Naive thymus-derived CD4-positive, alpha-beta T cell (primary cell): ENCODE measurements at regions of chr18 and their contacts with region 1.

Region 1: GRCh38 chr18:74081966-74082741 is 65.5 kb downstream of the FBXO15 start:
- DNase-seq: peak; percentile 37 to 80 (median 71)
- ATAC-seq: peak; percentile 94
- H3K4me3 ChIP-seq: peak overlapping the region; percentile 32
- H3K4me3 Mint-ChIP-seq: peak overlapping the region; percentile 71 to 96 (median 84)
- H3K27ac ChIP-seq: peak overlapping the region; percentile 74
- H3K27ac Mint-ChIP-seq: peak overlapping the region; percentile 93 to 98 (median 96)
- H3K4me1 ChIP-seq: peaks cover 0 to 16% of the 10 kb centered on the region in 2 donors
- H3K4me1 Mint-ChIP-seq: peaks cover 7 to 24% (median 21%) of the 10 kb centered on the region in 7 donors
- H3K27me3 ChIP-seq: no peaks in the 10 kb centered on the region
- H3K27me3 Mint-ChIP-seq: no peaks in the 10 kb centered on the region

Region 2: DNA sequence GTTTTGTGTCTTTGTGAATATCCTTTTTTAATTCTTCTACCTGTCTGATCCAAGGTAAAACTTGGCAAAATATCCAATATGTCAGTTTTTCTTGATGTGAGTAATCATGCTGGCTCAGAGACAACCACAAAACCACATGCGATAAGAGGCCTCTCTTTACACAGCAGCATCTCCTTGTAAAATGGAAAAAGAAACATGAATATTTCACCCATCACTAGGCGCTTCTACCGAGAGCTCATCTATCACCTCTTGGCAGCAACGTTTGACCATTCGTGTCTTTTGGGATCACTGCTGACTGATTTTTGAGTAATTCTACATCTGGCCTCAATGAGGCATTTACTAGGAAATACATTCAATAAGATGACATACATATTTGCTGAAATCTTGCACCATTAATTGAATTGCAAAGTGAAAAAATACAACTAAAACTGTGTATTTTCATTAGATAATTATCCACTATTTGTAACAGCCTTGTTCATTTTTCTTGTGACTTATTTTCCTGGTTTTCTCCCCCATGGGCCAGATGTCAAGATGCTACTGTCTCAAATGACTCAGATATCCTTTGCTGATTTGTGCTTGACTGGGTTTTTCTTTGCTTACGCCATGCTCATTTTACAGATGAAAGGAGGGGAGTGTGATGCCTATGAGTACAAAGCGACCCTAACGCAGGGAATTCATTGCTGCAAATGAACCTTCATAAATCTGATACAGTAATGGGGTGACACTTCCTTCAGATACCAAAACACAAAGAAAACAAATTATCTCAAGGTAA is 402.0 kb before region 1 on chr18:
- CTCF ChIA-PET with region 1: no interaction called
- POLR2A ChIA-PET with region 1: no interaction called
- intact Hi-C with region 1: no loop called
- DNase-seq: no peak
- ATAC-seq: no peak
- H3K4me3 ChIP-seq: no peak overlapping the region
- H3K4me3 Mint-ChIP-seq: no peak overlapping the region
- H3K27ac ChIP-seq: no peak overlapping the region
- H3K27ac Mint-ChIP-seq: no peak overlapping the region
- H3K4me1 ChIP-seq: no peaks in the 10 kb centered on the region
- H3K4me1 Mint-ChIP-seq: peaks cover 0 to 8% (median 0%) of the 10 kb centered on the region in 7 donors
- H3K27me3 ChIP-seq: no peaks in the 10 kb centered on the region
- H3K27me3 Mint-ChIP-seq: peaks cover 0 to 8% (median 0%) of the 10 kb centered on the region in 5 donors

Region 3: DNA sequence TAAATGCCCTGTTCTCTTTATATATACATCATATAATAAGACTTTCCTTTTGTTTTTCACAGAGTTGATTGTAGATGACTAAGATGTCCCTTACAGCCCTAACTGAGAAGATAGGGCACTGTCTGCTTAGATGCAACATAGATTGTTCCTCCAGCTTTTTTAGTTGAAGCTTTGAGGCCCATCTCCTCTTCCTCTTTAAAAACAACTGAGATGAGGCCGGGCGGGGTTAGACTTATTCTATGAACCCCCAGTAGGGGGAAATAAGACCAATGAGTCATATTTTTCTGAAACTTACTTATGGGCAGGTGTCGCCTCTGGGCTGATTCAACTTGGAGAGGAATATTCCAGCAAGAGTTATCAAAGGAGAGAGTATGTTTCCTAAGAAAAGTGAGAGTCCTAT is 19.1 kb before region 1 on chr18:
- CTCF ChIA-PET with region 1: interaction called, 30 read pairs
- POLR2A ChIA-PET with region 1: interaction called, 47 read pairs
- intact Hi-C with region 1: loop called (anchors 1 kb)
- DNase-seq: peak in 2 of 9 donors; percentile 17 to 48
- ATAC-seq: no peak
- H3K4me3 ChIP-seq: no peak overlapping the region
- H3K4me3 Mint-ChIP-seq: peak overlapping the region in 2 of 10 donors; percentile 18 to 21
- H3K27ac ChIP-seq: no peak overlapping the region
- H3K27ac Mint-ChIP-seq: peak overlapping the region in 6 of 9 donors; percentile 25 to 73 (median 56)
- H3K4me1 ChIP-seq: peaks cover 0 to 24% of the 10 kb centered on the region in 2 donors
- H3K4me1 Mint-ChIP-seq: peaks cover 0 to 47% (median 37%) of the 10 kb centered on the region in 7 donors
- H3K27me3 ChIP-seq: no peaks in the 10 kb centered on the region
- H3K27me3 Mint-ChIP-seq: peaks cover 0 to 23% (median 0%) of the 10 kb centered on the region in 5 donors

Region 4: DNA sequence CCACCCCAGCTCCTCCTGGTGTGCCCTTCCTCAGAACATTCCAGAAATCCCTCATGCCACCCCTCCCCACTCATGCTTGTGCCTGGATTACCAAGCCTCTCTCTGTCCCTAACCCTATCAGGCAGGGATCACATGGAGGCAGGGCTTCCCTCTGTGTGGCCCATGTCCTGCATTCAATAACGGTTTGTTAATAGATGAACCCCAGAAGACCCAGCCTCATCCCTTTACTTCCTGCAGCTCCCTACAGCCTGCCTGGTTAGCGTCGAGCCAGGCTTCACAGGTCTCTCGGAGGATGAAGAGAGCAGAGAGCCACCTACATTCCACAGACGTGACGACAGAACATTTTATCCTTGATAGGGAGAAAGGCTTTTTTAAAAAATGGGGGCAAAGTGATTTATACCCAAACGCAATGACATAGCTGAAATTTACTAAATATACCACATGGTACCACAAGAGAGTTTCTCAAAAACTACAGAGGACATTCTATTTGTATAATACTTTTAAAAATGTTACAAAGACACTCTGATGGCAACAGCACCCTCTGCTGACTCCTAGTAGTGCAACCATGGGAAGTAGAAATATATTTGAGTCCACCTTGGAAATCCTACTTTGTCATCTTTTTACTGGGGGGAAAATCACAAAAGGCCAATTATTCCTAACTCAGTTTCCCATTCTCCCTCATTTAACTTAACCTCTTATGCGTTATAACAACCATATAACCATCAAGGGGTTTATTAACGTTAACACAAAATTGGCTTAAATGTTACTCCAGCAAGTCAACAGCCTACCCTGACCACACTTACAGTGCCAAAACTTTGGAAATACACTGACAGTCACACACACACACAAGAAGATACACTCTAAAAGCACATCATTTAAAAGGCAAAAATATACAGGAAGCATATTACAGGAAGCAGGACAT is 34.7 kb after region 1 on chr18:
- CTCF ChIA-PET with region 1: interaction called, 41 read pairs
- POLR2A ChIA-PET with region 1: interaction called, 11 read pairs
- intact Hi-C with region 1: loop called (anchors 1 kb)
- DNase-seq: peak in 6 of 9 donors; percentile 13 to 54 (median 48)
- ATAC-seq: no peak
- H3K4me3 ChIP-seq: no peak overlapping the region
- H3K4me3 Mint-ChIP-seq: no peak overlapping the region
- H3K27ac ChIP-seq: no peak overlapping the region
- H3K27ac Mint-ChIP-seq: no peak overlapping the region
- H3K4me1 ChIP-seq: no peaks in the 10 kb centered on the region
- H3K4me1 Mint-ChIP-seq: peaks cover 3 to 19% (median 11%) of the 10 kb centered on the region in 7 donors
- H3K27me3 ChIP-seq: no peaks in the 10 kb centered on the region
- H3K27me3 Mint-ChIP-seq: peaks cover 0 to 4% (median 0%) of the 10 kb centered on the region in 5 donors

Region 5: DNA sequence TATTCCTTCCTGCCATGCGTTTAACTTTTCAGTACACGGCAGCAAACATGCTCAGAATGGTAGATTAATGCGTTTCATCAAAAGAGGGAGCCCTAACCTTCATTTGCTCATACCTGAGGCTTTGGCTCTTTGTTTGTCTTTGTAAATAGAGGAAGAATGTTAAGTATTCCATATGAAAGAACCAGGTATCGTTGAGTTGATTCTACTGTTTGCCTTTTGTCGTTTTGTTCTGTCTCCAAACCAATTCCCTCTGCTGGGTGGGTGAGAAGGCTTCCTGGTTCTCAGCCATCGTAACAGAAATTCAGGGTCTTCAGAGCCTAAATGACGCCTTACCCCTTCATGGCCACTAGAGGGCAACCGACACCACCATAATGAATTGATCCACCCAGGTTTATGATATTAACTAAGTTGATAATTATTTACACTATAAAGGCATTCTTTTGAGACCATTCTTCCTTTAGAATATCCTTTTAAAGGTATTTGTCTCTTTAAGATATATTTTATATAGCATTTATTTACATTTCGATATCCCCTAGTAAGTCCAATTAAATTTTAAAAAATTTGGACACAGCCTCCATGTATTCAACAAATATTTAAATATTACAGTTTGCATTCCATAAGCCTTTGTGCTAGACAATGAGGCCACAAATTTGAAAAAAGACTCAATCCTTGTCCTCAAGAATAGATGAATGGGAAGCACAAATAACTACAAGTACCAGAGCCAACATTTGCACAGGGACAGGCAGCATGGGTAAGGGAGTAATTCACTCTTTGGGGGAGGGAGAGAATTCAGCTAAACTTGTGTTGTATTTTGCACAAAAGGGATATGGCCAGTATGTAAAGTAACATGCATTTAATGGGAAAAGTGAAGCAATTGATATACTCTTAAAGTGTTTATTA is 114.3 kb after region 1 on chr18:
- CTCF ChIA-PET with region 1: interaction called, 6 read pairs
- POLR2A ChIA-PET with region 1: no interaction called
- intact Hi-C with region 1: loop called in 1 of 2 experiments (anchors 1 kb)
- DNase-seq: peak in 7 of 9 donors; percentile 51 to 80 (median 71)
- ATAC-seq: peak; percentile 95
- H3K4me3 ChIP-seq: peak overlapping the region; percentile 55
- H3K4me3 Mint-ChIP-seq: peak overlapping the region; percentile 63 to 90 (median 86)
- H3K27ac ChIP-seq: peak overlapping the region; percentile 63
- H3K27ac Mint-ChIP-seq: peak overlapping the region in 8 of 9 donors; percentile 51 to 90 (median 79)
- H3K4me1 ChIP-seq: no peaks in the 10 kb centered on the region
- H3K4me1 Mint-ChIP-seq: peaks cover 0 to 7% (median 0%) of the 10 kb centered on the region in 7 donors
- H3K27me3 ChIP-seq: no peaks in the 10 kb centered on the region
- H3K27me3 Mint-ChIP-seq: peaks cover 1 to 11% (median 2%) of the 10 kb centered on the region in 5 donors

Region 6: GRCh38 chr18:74342416-74343043 is 260.4 kb after region 1 on chr18:
- CTCF ChIA-PET with region 1: interaction called, 17 read pairs
- POLR2A ChIA-PET with region 1: no interaction called
- intact Hi-C with region 1: loop called (anchors 1 to 5 kb)
- DNase-seq: peak in 7 of 9 donors; percentile 11 to 59 (median 38)
- ATAC-seq: peak; percentile 49
- H3K4me3 ChIP-seq: no peak overlapping the region
- H3K4me3 Mint-ChIP-seq: no peak overlapping the region
- H3K27ac ChIP-seq: no peak overlapping the region
- H3K27ac Mint-ChIP-seq: no peak overlapping the region
- H3K4me1 ChIP-seq: no peaks in the 10 kb centered on the region
- H3K4me1 Mint-ChIP-seq: no peaks in the 10 kb centered on the region
- H3K27me3 ChIP-seq: no peaks in the 10 kb centered on the region
- H3K27me3 Mint-ChIP-seq: peaks cover 2 to 39% (median 4%) of the 10 kb centered on the region in 5 donors

Region 7: GRCh38 chr18:74597662-74598349 is 515.7 kb after region 1 on chr18 and contains the start of gene ZNF407:
- CTCF ChIA-PET with region 1: no interaction called
- POLR2A ChIA-PET with region 1: interaction called, 6 read pairs
- intact Hi-C with region 1: loop called in 1 of 2 experiments (anchors 2 kb)
- DNase-seq: peak; percentile 77 to 94 (median 90)
- ATAC-seq: peak; percentile 84
- H3K4me3 ChIP-seq: peak within 1 kb of the TSS; percentile 100
- H3K4me3 Mint-ChIP-seq: peak within 1 kb of the TSS; percentile 89 to 96 (median 95)
- H3K27ac ChIP-seq: peak within 1 kb of the TSS; percentile 88
- H3K27ac Mint-ChIP-seq: peak within 1 kb of the TSS; percentile 95 to 99 (median 98)
- H3K4me1 ChIP-seq: peaks cover 26 to 27% of the 10 kb centered on the region in 2 donors
- H3K4me1 Mint-ChIP-seq: peaks cover 33 to 74% (median 61%) of the 10 kb centered on the region in 7 donors
- H3K27me3 ChIP-seq: no peaks in the 10 kb centered on the region
- H3K27me3 Mint-ChIP-seq: no peaks in the 10 kb centered on the region
- total RNA-seq, gene ZNF407: 23.1 to 31.3 (median 29.7) TPM